SK-N-SH (cell line): ENCODE measurements at regions of chr7 and their contacts with region 1.

Region 1: GRCh38 chr7:45136106-45137060 is 21.2 kb upstream of the RAMP3 start:
- DNase-seq: peak; percentile 86
- H3K4me3 ChIP-seq: no peak overlapping the region; a peak in 1 of 4 replicates
- H3K27ac ChIP-seq: no peak overlapping the region
- H3K4me1 ChIP-seq: no peaks in the 10 kb centered on the region
- H3K27me3 ChIP-seq: peaks cover 9% of the 10 kb centered on the region; the same call in 1 of the 2 replicates
- CTCF ChIP-seq: peak; percentile 99
- EP300 ChIP-seq: no peak
- RAD21 ChIP-seq: peak; percentile 100

Region 2: DNA sequence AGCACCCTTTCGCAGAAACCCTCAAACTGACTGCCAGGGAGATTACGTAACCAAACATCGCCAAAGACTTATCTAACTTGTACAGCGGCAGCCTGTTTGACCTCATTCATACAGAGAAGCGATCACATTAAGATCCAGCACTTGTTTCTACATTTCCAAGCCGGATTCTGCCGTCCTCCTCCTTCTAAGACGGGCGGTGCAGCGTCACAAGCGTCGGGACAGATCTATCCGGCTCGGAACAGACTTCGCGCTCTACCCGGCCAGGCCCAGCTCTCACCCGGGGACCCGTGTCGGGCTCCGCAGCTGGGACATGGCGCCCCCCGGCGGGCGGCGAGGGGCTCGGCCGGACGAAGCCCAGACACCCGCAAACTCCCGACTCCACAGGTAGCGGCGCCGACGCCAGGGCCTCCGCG is 288.9 kb before region 1 on chr7:
- CTCF ChIA-PET with region 1: interaction called, 14 read pairs
- POLR2A ChIA-PET with region 1: interaction called, 3 read pairs
- DNase-seq: peak; percentile 94
- H3K4me3 ChIP-seq: peak overlapping the region; percentile 66 to 82
- H3K27ac ChIP-seq: peak overlapping the region; percentile 85 to 91
- H3K4me1 ChIP-seq: peaks cover 5 to 21% of the 10 kb centered on the region in 2 experiments; a peak in 3 of 4 replicates
- H3K27me3 ChIP-seq: no peaks in the 10 kb centered on the region
- CTCF ChIP-seq: peak; percentile 96
- EP300 ChIP-seq: no peak
- RAD21 ChIP-seq: peak; percentile 79

Region 3: GRCh38 chr7:44885394-44886317 is 250.7 kb before region 1 on chr7 and contains the start of gene PURB:
- CTCF ChIA-PET with region 1: interaction called, 19 read pairs
- POLR2A ChIA-PET with region 1: no interaction called
- DNase-seq: peak; percentile 99
- H3K4me3 ChIP-seq: peak within 1 kb of the TSS; percentile 78 to 87
- H3K27ac ChIP-seq: peak within 1 kb of the TSS; percentile 90 to 97
- H3K4me1 ChIP-seq: peaks cover 23 to 41% of the 10 kb centered on the region in 2 experiments; a peak in 3 of 4 replicates
- H3K27me3 ChIP-seq: no peaks in the 10 kb centered on the region
- CTCF ChIP-seq: no peak
- EP300 ChIP-seq: peak in 1 of 2 experiments; percentile 75; a peak in 1 of 4 replicates
- RAD21 ChIP-seq: no peak
- polyA plus RNA-seq, gene PURB: 4.1 and 4.8 TPM in 2 replicates

Region 4: GRCh38 chr7:44955733-44956132 is 180.7 kb before region 1 on chr7:
- CTCF ChIA-PET with region 1: interaction called, 11 read pairs
- POLR2A ChIA-PET with region 1: no interaction called
- DNase-seq: peak; percentile 14
- H3K4me3 ChIP-seq: no peak overlapping the region
- H3K27ac ChIP-seq: no peak overlapping the region
- H3K4me1 ChIP-seq: no peaks in the 10 kb centered on the region; a peak in 1 of 4 replicates
- H3K27me3 ChIP-seq: peaks cover 8% of the 10 kb centered on the region; the same call in 1 of the 2 replicates
- CTCF ChIP-seq: no peak
- EP300 ChIP-seq: no peak
- RAD21 ChIP-seq: no peak

Region 5: GRCh38 chr7:44980393-44981034 is 155.9 kb before region 1 on chr7:
- CTCF ChIA-PET with region 1: interaction called, 17 read pairs
- POLR2A ChIA-PET with region 1: no interaction called
- DNase-seq: no peak
- H3K4me3 ChIP-seq: no peak overlapping the region
- H3K27ac ChIP-seq: no peak overlapping the region
- H3K4me1 ChIP-seq: peaks cover 13 to 19% of the 10 kb centered on the region in 2 experiments; a peak in 3 of 4 replicates
- H3K27me3 ChIP-seq: no peaks in the 10 kb centered on the region
- CTCF ChIP-seq: no peak
- EP300 ChIP-seq: no peak
- RAD21 ChIP-seq: no peak

Region 6: DNA sequence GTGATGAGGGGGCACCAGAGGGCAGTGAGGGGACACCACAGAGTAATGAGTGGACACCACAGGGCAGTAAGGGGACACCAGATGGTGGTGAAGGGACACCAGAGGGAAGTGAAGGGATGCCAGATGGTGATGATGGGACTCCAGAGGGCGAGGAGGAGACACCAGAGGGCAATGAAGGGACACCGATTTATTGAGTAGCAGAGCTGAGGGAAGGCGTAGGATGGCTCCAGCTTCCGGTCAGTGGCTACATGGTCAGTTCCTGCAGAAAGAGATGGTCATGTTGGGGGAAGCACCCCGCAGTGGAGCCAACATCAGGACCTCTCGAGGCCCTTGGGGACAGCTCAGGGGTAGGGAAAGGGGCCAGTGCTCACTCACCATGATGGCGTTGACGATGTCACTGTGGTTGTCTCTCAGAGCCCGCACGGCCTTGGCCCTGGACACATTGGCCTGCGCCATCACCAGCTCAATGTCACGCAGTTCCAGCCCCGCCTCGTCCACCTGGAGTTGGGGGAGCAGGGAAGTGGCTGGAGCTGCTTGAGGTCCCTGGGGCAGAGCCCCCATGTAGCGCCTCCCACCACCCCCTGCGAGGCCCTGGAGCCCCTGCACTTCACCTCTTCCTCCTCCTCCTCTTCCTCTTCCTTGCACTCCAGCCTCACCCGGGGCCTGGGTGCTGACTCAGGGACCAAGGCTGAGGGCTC is 56.0 kb before region 1 on chr7:
- CTCF ChIA-PET with region 1: interaction called, 36 read pairs
- POLR2A ChIA-PET with region 1: no interaction called
- DNase-seq: peak; percentile 30
- H3K4me3 ChIP-seq: no peak overlapping the region
- H3K27ac ChIP-seq: no peak overlapping the region
- H3K4me1 ChIP-seq: peaks cover 0 to 9% of the 10 kb centered on the region in 2 experiments; a peak in 1 of 4 replicates
- H3K27me3 ChIP-seq: no peaks in the 10 kb centered on the region
- CTCF ChIP-seq: no peak
- EP300 ChIP-seq: no peak
- RAD21 ChIP-seq: no peak

Region 7: GRCh38 chr7:45146531-45147379 is 10.4 kb after region 1 on chr7:
- CTCF ChIA-PET with region 1: interaction called, 71 read pairs
- POLR2A ChIA-PET with region 1: no interaction called
- DNase-seq: no peak
- H3K4me3 ChIP-seq: no peak overlapping the region
- H3K27ac ChIP-seq: no peak overlapping the region
- H3K4me1 ChIP-seq: peaks cover 0 to 4% of the 10 kb centered on the region in 2 experiments; a peak in 1 of 4 replicates
- H3K27me3 ChIP-seq: peaks cover 15% of the 10 kb centered on the region
- CTCF ChIP-seq: no peak
- EP300 ChIP-seq: no peak
- RAD21 ChIP-seq: no peak; the same call in 1 of the 2 replicates

Region 8: DNA sequence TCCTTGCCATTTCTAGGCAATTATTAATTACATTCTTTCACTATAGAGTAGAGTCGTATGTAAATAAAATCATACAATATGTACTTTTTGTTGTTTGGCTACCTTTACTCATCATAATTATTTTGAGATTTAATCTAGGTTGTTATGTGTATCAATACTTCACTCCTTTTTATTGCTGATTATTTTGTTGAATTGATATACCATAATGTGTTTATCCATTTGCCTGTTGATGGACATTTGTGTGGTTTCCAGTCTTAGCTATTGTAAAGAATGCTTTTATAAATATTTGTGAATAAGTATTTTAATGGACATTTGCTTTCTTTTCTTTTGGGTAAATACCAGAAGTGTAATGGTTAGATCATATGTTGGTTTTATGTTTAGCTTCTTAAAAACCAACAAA is 195.2 kb after region 1 on chr7:
- CTCF ChIA-PET with region 1: no interaction called
- POLR2A ChIA-PET with region 1: no interaction called
- DNase-seq: no peak
- H3K4me3 ChIP-seq: no peak overlapping the region
- H3K27ac ChIP-seq: no peak overlapping the region
- H3K4me1 ChIP-seq: no peaks in the 10 kb centered on the region
- H3K27me3 ChIP-seq: no peaks in the 10 kb centered on the region
- CTCF ChIP-seq: no peak
- EP300 ChIP-seq: no peak
- RAD21 ChIP-seq: no peak